Endothelial cell of umbilical vein (primary cell): ENCODE measurements at regions of chr1 and their contacts with region 1.

Region 1: DNA sequence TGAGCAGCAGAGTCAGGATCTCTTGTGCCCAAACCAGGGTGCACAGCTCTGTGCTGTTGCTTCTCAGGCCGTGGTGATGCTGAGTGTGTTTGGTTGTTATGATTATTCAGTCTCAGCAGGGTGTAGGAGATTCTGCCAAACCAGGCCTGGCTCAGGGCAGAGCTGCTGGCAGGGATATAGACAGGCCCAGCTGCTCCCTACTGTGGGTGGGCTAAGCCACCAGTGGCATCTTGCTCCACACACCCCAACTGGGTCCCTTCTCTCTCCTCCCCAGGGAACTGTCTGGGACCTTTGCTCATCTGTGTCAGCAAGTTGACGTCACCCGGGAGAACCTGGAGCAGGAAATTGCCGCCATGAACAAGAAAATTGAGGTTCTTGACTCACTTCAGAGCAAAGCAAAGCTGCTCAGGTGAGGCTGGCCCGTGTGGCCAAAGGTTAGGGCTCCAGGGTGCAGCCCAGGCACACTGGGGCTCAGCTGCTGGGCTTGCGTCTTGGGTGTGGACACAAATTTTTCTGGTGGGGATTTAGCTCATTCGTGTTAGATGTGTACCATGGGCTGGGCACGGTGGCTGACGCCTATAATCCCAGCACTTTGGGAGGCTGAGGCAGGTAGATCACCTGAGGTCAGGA is 9.9 kb upstream of the MIIP start:
- DNase-seq: no peak
- H3K4me3 ChIP-seq: no peak overlapping the region
- H3K27ac ChIP-seq: no peak overlapping the region
- H3K4me1 ChIP-seq: no peaks in the 10 kb centered on the region
- H3K27me3 ChIP-seq: no peaks in the 10 kb centered on the region
- CTCF ChIP-seq: no peak
- POLR2A ChIP-seq: no peak

Region 2: DNA sequence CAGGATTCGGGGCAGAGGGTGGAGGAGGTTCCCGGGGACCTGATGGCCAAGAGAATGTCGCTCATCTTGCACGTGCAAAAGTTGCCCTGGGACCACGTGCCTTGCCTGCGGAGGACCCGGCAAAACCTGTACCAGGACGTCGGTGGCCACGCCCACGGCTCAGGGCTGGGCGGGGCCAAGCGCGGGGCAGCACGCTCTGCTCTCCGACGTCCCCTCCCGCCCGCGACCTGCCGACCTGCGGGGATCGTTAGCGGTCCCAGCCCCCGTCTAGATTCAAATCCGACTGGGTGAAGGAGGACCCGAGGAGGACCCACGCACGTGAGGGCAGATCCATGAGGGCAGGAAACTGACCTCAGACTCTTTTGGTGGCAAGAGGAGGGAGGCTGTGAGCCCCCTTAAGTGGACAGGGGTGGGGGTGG is 247.4 kb before region 1 on chr1 and contains the start of gene C1orf167:
- CTCF ChIA-PET with region 1: no interaction called
- POLR2A ChIA-PET with region 1: no interaction called
- dilution Hi-C with region 1: no loop called
- intact Hi-C with region 1: no loop called
- DNase-seq: no peak
- H3K4me3 ChIP-seq: no peak within 1 kb of the TSS
- H3K27ac ChIP-seq: no peak within 1 kb of the TSS
- H3K4me1 ChIP-seq: no peaks in the 10 kb centered on the region
- H3K27me3 ChIP-seq: peaks cover 0 to 6% of the 10 kb centered on the region in 2 experiments
- CTCF ChIP-seq: no peak
- POLR2A ChIP-seq: no peak
- total RNA-seq, gene C1orf167: not detected in 2 replicates

Region 3: GRCh38 chr1:11913291-11913690 is 96.1 kb before region 1 on chr1:
- CTCF ChIA-PET with region 1: no interaction called
- POLR2A ChIA-PET with region 1: interaction called, 5 read pairs
- dilution Hi-C with region 1: no loop called
- intact Hi-C with region 1: loop called (anchors 2 kb)
- DNase-seq: no peak
- H3K4me3 ChIP-seq: no peak overlapping the region
- H3K27ac ChIP-seq: no peak overlapping the region
- H3K4me1 ChIP-seq: peaks cover 3% of the 10 kb centered on the region
- H3K27me3 ChIP-seq: no peaks in the 10 kb centered on the region
- CTCF ChIP-seq: no peak
- POLR2A ChIP-seq: no peak

Region 4: DNA sequence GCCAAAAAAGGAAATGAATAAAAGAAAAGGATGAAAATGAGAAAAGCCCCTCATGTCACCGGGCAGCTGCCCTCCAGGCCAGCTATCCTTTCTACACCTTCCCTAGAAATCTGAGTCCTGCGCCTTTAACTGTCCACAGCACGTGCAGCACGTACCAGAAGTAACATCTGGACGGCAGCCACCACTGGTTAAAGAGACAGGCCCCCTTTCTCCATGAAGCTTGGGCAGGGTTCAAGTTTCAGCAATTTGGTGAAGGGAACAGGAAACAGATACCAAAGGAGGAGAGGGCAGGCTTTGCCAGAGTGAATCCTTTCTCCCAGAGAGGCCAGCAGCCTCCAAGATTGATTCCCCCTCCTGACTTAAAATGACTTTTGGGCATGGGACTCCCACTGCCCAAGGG is 79.6 kb before region 1 on chr1:
- CTCF ChIA-PET with region 1: no interaction called
- POLR2A ChIA-PET with region 1: no interaction called
- dilution Hi-C with region 1: no loop called
- intact Hi-C with region 1: no loop called
- DNase-seq: peak; percentile 38
- H3K4me3 ChIP-seq: no peak overlapping the region
- H3K27ac ChIP-seq: peak overlapping the region; percentile 65
- H3K4me1 ChIP-seq: peaks cover 35% of the 10 kb centered on the region
- H3K27me3 ChIP-seq: no peaks in the 10 kb centered on the region
- CTCF ChIP-seq: no peak
- POLR2A ChIP-seq: no peak

Region 5: GRCh38 chr1:12019858-12020509 is 10.6 kb after region 1 on chr1:
- CTCF ChIA-PET with region 1: no interaction called
- POLR2A ChIA-PET with region 1: no interaction called
- dilution Hi-C with region 1: no loop called
- intact Hi-C with region 1: no loop called
- DNase-seq: peak; percentile 30
- H3K4me3 ChIP-seq: peak overlapping the region; percentile 11 to 87 (median 70)
- H3K27ac ChIP-seq: no peak overlapping the region
- H3K4me1 ChIP-seq: no peaks in the 10 kb centered on the region
- H3K27me3 ChIP-seq: no peaks in the 10 kb centered on the region
- CTCF ChIP-seq: no peak
- POLR2A ChIP-seq: no peak

Region 6: DNA sequence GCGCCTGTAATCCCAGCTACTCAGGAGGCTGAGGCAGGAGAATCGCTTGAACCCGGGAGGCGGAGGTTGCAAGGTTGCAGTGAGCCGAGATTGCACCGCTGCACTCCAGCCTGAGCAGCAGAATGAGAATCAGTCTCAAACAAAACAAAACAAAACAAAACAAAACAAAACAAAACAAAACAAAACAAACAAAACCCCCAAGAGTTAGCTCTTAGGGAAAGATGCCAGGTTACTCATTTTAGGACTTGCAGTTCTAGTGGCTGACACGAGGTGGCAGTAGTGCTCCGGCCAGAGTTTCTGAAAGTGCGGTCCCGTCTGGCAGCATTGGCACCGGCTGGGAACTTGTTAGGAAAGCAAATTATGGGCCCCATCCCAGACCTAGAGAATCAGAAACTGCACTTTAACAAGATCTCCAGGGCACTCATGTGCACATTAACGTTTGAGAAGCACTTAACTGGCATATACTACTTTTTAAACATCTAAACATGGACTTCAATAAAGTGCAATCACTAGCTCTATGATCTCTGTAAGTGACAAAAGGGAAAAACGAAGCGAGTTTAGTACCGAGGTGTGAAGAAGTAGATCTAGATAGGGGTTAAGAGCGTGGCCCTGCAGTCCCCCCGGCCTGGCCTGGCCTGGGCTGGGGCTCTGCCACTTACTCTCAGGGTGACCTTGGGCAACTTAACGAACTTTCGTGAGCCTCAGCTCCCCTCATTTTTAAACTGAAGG is 115.4 kb after region 1 on chr1:
- CTCF ChIA-PET with region 1: no interaction called
- POLR2A ChIA-PET with region 1: no interaction called
- dilution Hi-C with region 1: no loop called
- intact Hi-C with region 1: no loop called
- DNase-seq: peak; percentile 77
- H3K4me3 ChIP-seq: no peak overlapping the region
- H3K27ac ChIP-seq: no peak overlapping the region
- H3K4me1 ChIP-seq: peaks cover 9% of the 10 kb centered on the region
- H3K27me3 ChIP-seq: peaks cover 0 to 3% of the 10 kb centered on the region in 2 experiments
- CTCF ChIP-seq: peak; percentile 77 to 91
- POLR2A ChIP-seq: no peak

Region 7: GRCh38 chr1:12220890-12221289 is 211.5 kb after region 1 on chr1:
- CTCF ChIA-PET with region 1: no interaction called
- POLR2A ChIA-PET with region 1: interaction called, 12 read pairs
- dilution Hi-C with region 1: no loop called
- intact Hi-C with region 1: no loop called
- DNase-seq: no peak
- H3K4me3 ChIP-seq: no peak overlapping the region
- H3K27ac ChIP-seq: no peak overlapping the region
- H3K4me1 ChIP-seq: no peaks in the 10 kb centered on the region
- H3K27me3 ChIP-seq: peaks cover 2% of the 10 kb centered on the region in 2 experiments
- CTCF ChIP-seq: no peak
- POLR2A ChIP-seq: no peak